H1 (cell line): ENCODE measurements at regions of chr16 and their contacts with region 1.

Region 1: GRCh38 chr16:83402967-83403366 is 404.8 kb upstream of the HSBP1 start:
- DNase-seq: no peak
- H3K4me3 ChIP-seq: no peak overlapping the region
- H3K27ac ChIP-seq: no peak overlapping the region
- H3K4me1 ChIP-seq: no peaks in the 10 kb centered on the region
- H3K27me3 ChIP-seq: no peaks in the 10 kb centered on the region
- CTCF ChIP-seq: no peak
- EP300 ChIP-seq: no peak
- POLR2A ChIP-seq: no peak
- RAD21 ChIP-seq: no peak

Region 2: DNA sequence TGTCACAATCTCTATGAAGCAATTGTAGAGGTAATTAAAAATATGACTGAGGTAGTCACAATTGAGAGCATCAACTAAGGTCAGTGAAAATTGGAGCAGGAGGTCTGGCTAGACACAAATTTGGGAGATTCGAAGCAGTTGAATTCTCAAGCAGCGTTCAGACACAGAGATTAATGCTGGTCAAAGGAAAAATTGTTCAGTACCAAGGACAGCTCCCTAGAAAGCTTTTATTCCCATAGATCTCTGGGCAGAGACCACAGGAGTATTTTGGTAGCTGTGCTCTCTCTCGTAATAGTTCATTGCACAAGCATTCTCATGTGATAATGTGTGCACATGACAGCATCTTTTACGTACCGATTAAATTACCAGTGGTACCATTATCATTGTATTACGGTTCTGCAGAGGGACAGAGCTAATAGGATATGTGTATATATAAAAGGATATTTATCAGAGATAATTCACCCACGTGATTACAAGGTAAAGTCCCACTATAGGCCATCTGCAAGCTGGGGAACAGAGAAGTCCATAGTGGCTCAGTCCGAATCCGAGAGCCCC is 17.3 kb after region 1 on chr16:
- CTCF ChIA-PET with region 1: interaction called, 22 read pairs
- POLR2A ChIA-PET with region 1: no interaction called
- DNase-seq: no peak
- H3K4me3 ChIP-seq: no peak overlapping the region
- H3K27ac ChIP-seq: no peak overlapping the region
- H3K4me1 ChIP-seq: no peaks in the 10 kb centered on the region
- H3K27me3 ChIP-seq: no peaks in the 10 kb centered on the region; a peak in 1 of 7 replicates
- CTCF ChIP-seq: no peak
- EP300 ChIP-seq: no peak
- POLR2A ChIP-seq: no peak
- RAD21 ChIP-seq: no peak

Region 3: GRCh38 chr16:83494459-83494858 is 91.5 kb after region 1 on chr16:
- CTCF ChIA-PET with region 1: no interaction called
- POLR2A ChIA-PET with region 1: no interaction called
- DNase-seq: no peak
- H3K4me3 ChIP-seq: no peak overlapping the region
- H3K27ac ChIP-seq: no peak overlapping the region
- H3K4me1 ChIP-seq: no peaks in the 10 kb centered on the region
- H3K27me3 ChIP-seq: no peaks in the 10 kb centered on the region
- CTCF ChIP-seq: no peak
- EP300 ChIP-seq: no peak
- POLR2A ChIP-seq: no peak
- RAD21 ChIP-seq: no peak